CD4-positive, alpha-beta T cell (primary cell): ENCODE measurements at regions of chr5 and their contacts with region 1.

Region 1: GRCh38 chr5:126339215-126339805 is 83.9 kb upstream of the GRAMD2B start:
- DNase-seq: peak in 10 of 14 experiments; percentile 12 to 79 (median 40)
- ATAC-seq: peak; percentile 46
- H3K4me3 ChIP-seq: no peak overlapping the region
- H3K4me3 Mint-ChIP-seq: no peak overlapping the region
- H3K27ac ChIP-seq: no peak overlapping the region
- H3K27ac Mint-ChIP-seq: no peak overlapping the region
- H3K4me1 ChIP-seq: no peaks in the 10 kb centered on the region
- H3K4me1 Mint-ChIP-seq: no peaks in the 10 kb centered on the region
- H3K27me3 ChIP-seq: peaks cover 4 to 21% of the 10 kb centered on the region in 2 experiments
- H3K27me3 Mint-ChIP-seq: peaks cover 42% of the 10 kb centered on the region
- CTCF ChIP-seq: peak; percentile 82

Region 2: GRCh38 chr5:126284977-126285696 is 54.2 kb before region 1 on chr5:
- CTCF ChIA-PET with region 1: no interaction called
- POLR2A ChIA-PET with region 1: no interaction called
- intact Hi-C with region 1: no loop called
- DNase-seq: no peak
- ATAC-seq: no peak
- H3K4me3 ChIP-seq: no peak overlapping the region
- H3K4me3 Mint-ChIP-seq: no peak overlapping the region
- H3K27ac ChIP-seq: no peak overlapping the region
- H3K27ac Mint-ChIP-seq: no peak overlapping the region
- H3K4me1 ChIP-seq: no peaks in the 10 kb centered on the region
- H3K4me1 Mint-ChIP-seq: no peaks in the 10 kb centered on the region
- H3K27me3 ChIP-seq: no peaks in the 10 kb centered on the region
- H3K27me3 Mint-ChIP-seq: peaks cover 33% of the 10 kb centered on the region
- CTCF ChIP-seq: no peak

Region 3: GRCh38 chr5:126538579-126538978 is 199.3 kb after region 1 on chr5:
- CTCF ChIA-PET with region 1: interaction called, 8 read pairs
- POLR2A ChIA-PET with region 1: interaction called, 4 read pairs
- intact Hi-C with region 1: loop called (anchors 1 kb)
- DNase-seq: no peak
- ATAC-seq: no peak
- H3K4me3 ChIP-seq: no peak overlapping the region
- H3K4me3 Mint-ChIP-seq: no peak overlapping the region
- H3K27ac ChIP-seq: no peak overlapping the region
- H3K27ac Mint-ChIP-seq: no peak overlapping the region
- H3K4me1 ChIP-seq: no peaks in the 10 kb centered on the region
- H3K4me1 Mint-ChIP-seq: peaks cover 5% of the 10 kb centered on the region
- H3K27me3 ChIP-seq: no peaks in the 10 kb centered on the region
- H3K27me3 Mint-ChIP-seq: no peaks in the 10 kb centered on the region
- CTCF ChIP-seq: no peak

Region 4: GRCh38 chr5:126544087-126544740 is 204.9 kb after region 1 on chr5:
- CTCF ChIA-PET with region 1: interaction called, 8 read pairs
- POLR2A ChIA-PET with region 1: no interaction called
- intact Hi-C with region 1: loop called in 1 of 2 experiments (anchors 1 kb)
- DNase-seq: peak in 10 of 14 experiments; percentile 3 to 46 (median 20)
- ATAC-seq: peak; percentile 49
- H3K4me3 ChIP-seq: no peak overlapping the region
- H3K4me3 Mint-ChIP-seq: no peak overlapping the region
- H3K27ac ChIP-seq: no peak overlapping the region
- H3K27ac Mint-ChIP-seq: no peak overlapping the region
- H3K4me1 ChIP-seq: no peaks in the 10 kb centered on the region
- H3K4me1 Mint-ChIP-seq: peaks cover 2% of the 10 kb centered on the region
- H3K27me3 ChIP-seq: no peaks in the 10 kb centered on the region
- H3K27me3 Mint-ChIP-seq: no peaks in the 10 kb centered on the region
- CTCF ChIP-seq: no peak

Region 5: DNA sequence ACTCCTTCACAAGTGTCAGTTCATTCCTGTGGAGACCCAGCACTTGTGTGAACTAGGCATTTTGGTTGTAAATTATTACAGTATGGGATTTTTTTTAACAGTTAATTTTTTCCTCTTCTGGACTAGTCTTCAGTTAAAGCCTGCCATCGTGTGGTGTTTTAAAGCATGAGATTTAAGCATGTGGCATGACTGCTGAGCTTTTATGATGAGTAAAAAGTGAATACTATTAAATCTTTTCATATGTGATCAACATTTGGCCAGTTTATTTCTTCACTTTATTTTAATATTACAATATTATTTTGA is 462.6 kb after region 1 on chr5:
- CTCF ChIA-PET with region 1: no interaction called
- POLR2A ChIA-PET with region 1: no interaction called
- intact Hi-C with region 1: loop called in 1 of 2 experiments (anchors 5 kb)
- DNase-seq: peak in 4 of 14 experiments; percentile 12 to 59 (median 52)
- ATAC-seq: peak; percentile 48
- H3K4me3 ChIP-seq: no peak overlapping the region
- H3K4me3 Mint-ChIP-seq: no peak overlapping the region
- H3K27ac ChIP-seq: no peak overlapping the region
- H3K27ac Mint-ChIP-seq: no peak overlapping the region
- H3K4me1 ChIP-seq: peaks cover 9% of the 10 kb centered on the region
- H3K4me1 Mint-ChIP-seq: peaks cover 40% of the 10 kb centered on the region
- H3K27me3 ChIP-seq: no peaks in the 10 kb centered on the region
- H3K27me3 Mint-ChIP-seq: no peaks in the 10 kb centered on the region
- CTCF ChIP-seq: no peak